IMR-90 (cell line): ENCODE measurements at regions of chr18 and their contacts with region 1.

Region 1: GRCh38 chr18:11324956-11325873 is 175.8 kb upstream of the PIEZO2 start:
- DNase-seq: peak; percentile 85
- ATAC-seq: peak; percentile 69
- H3K4me3 ChIP-seq: no peak overlapping the region
- H3K27ac ChIP-seq: peak overlapping the region; percentile 85
- H3K4me1 ChIP-seq: peaks cover 29% of the 10 kb centered on the region
- H3K27me3 ChIP-seq: no peaks in the 10 kb centered on the region
- CTCF ChIP-seq: no peak
- POLR2A ChIP-seq: no peak
- RAD21 ChIP-seq: no peak

Region 2: DNA sequence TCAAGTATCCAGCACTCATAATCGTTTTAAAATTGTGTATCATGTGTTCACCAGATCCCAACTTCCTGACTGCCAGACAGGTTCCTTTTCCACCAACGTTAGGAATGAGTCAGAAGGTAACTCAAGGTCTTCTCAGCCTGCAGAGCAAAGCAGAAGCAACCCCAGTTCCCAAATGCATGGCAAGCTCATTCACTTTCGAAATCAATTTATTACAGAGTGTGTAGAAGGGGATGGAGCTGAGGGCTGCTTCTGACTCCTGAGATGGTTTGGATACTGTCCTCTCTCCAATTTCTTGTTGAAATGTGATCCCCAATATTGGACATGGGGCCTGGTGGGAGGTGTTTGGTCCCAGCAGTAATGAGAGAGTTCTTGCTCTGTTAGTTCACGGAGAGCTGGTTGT is 290.3 kb before region 1 on chr18:
- CTCF ChIA-PET with region 1: no interaction called
- POLR2A ChIA-PET with region 1: no interaction called
- dilution Hi-C with region 1: no loop called
- in situ Hi-C with region 1: no loop called
- intact Hi-C with region 1: no loop called
- DNase-seq: peak; percentile 53
- ATAC-seq: 0 out of 2 replicates have a peak, but pooled peaks have one; percentile 37
- H3K4me3 ChIP-seq: no peak overlapping the region
- H3K27ac ChIP-seq: no peak overlapping the region
- H3K4me1 ChIP-seq: peaks cover 4% of the 10 kb centered on the region; the same call in 1 of the 2 replicates
- H3K27me3 ChIP-seq: no peaks in the 10 kb centered on the region
- CTCF ChIP-seq: no peak
- POLR2A ChIP-seq: no peak
- RAD21 ChIP-seq: no peak

Region 3: GRCh38 chr18:11089931-11090715 is 235.1 kb before region 1 on chr18:
- CTCF ChIA-PET with region 1: no interaction called
- POLR2A ChIA-PET with region 1: no interaction called
- dilution Hi-C with region 1: no loop called
- in situ Hi-C with region 1: no loop called
- intact Hi-C with region 1: no loop called
- DNase-seq: no peak
- ATAC-seq: no peak
- H3K4me3 ChIP-seq: no peak overlapping the region
- H3K27ac ChIP-seq: no peak overlapping the region
- H3K4me1 ChIP-seq: no peaks in the 10 kb centered on the region; the same call in 1 of the 2 replicates
- H3K27me3 ChIP-seq: no peaks in the 10 kb centered on the region
- CTCF ChIP-seq: no peak
- POLR2A ChIP-seq: no peak
- RAD21 ChIP-seq: no peak

Region 4: DNA sequence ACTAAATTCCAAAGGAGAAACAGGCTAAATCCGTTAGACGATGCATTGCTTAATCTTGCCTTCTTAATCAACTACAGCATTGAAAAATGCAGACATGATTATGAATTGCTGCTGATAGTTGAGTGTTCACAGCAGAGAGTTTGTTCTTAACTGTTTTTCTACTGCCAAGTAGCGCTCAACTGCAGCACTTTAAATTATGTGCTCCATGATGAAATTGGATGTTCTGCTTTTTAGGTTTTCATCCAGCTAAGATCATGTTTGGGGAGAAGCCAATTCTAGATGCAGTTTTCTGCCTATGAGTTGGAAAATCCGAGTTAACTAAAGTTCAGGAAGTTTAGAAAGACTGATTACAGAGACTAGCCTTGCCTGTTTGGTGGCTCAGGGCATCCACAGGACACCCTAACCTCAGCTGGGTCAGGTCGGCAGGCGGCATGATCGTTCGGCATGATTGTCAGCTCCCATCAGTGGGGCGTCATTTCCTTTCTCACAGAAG is 56.4 kb before region 1 on chr18:
- CTCF ChIA-PET with region 1: no interaction called
- POLR2A ChIA-PET with region 1: no interaction called
- dilution Hi-C with region 1: no loop called
- in situ Hi-C with region 1: no loop called
- intact Hi-C with region 1: loop called (anchors 2 kb)
- DNase-seq: peak; percentile 23
- ATAC-seq: peak; percentile 77
- H3K4me3 ChIP-seq: peak overlapping the region; percentile 37
- H3K27ac ChIP-seq: peak overlapping the region; percentile 70; the same call in 1 of the 2 replicates
- H3K4me1 ChIP-seq: no peaks in the 10 kb centered on the region; the same call in none of the 2 replicates
- H3K27me3 ChIP-seq: no peaks in the 10 kb centered on the region
- CTCF ChIP-seq: no peak
- POLR2A ChIP-seq: no peak
- RAD21 ChIP-seq: no peak

Region 5: DNA sequence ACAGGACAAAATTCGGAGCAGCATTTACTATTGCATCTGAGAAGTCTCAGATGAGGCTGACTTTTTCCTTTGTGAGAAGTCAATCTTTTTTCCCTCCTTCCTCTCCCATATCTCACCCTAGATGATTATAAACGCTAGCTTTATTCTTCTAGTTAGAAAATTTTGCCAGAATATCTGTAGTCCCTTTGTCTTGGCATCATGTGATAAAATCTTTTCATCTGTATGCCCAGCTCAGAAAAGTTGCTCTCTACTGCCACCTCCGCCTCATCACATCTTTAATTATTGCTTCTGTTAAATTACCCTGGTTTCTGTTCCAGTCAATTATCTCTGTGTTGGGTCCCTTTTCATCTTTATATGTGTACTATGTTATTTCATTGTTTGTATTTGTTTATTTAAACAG is 73.4 kb after region 1 on chr18:
- CTCF ChIA-PET with region 1: no interaction called
- POLR2A ChIA-PET with region 1: no interaction called
- dilution Hi-C with region 1: no loop called
- in situ Hi-C with region 1: no loop called
- intact Hi-C with region 1: loop called (anchors 5 kb)
- DNase-seq: peak; percentile 1
- ATAC-seq: no peak
- H3K4me3 ChIP-seq: no peak overlapping the region
- H3K27ac ChIP-seq: no peak overlapping the region
- H3K4me1 ChIP-seq: no peaks in the 10 kb centered on the region
- H3K27me3 ChIP-seq: no peaks in the 10 kb centered on the region
- CTCF ChIP-seq: peak; percentile 21; the same call in 1 of the 2 replicates
- POLR2A ChIP-seq: no peak
- RAD21 ChIP-seq: no peak

Region 6: GRCh38 chr18:11500153-11501122 is 175.2 kb after region 1 on chr18:
- CTCF ChIA-PET with region 1: no interaction called
- POLR2A ChIA-PET with region 1: no interaction called
- dilution Hi-C with region 1: no loop called
- in situ Hi-C with region 1: no loop called
- intact Hi-C with region 1: loop called (anchors 5 kb)
- DNase-seq: peak; percentile 98
- ATAC-seq: peak; percentile 97
- H3K4me3 ChIP-seq: no peak overlapping the region
- H3K27ac ChIP-seq: no peak overlapping the region
- H3K4me1 ChIP-seq: peaks cover 2% of the 10 kb centered on the region; the same call in 1 of the 2 replicates
- H3K27me3 ChIP-seq: no peaks in the 10 kb centered on the region
- CTCF ChIP-seq: no peak
- POLR2A ChIP-seq: no peak
- RAD21 ChIP-seq: no peak